Sigmoid colon (tissue), 7 donors: ENCODE measurements at regions of chr16 and their contacts with region 1.

Region 1: GRCh38 chr16:28924732-28925385 is at the start of gene RABEP2:
- DNase-seq: peak; percentile 95
- H3K4me3 ChIP-seq: peak within 1 kb of the TSS; percentile 61 to 95 (median 84)
- H3K27ac ChIP-seq: peak within 1 kb of the TSS; percentile 89 to 98 (median 98)
- H3K4me1 ChIP-seq: peaks cover 0 to 12% (median 9%) of the 10 kb centered on the region in 4 donors
- H3K27me3 ChIP-seq: no peaks in the 10 kb centered on the region
- CTCF ChIP-seq: no peak
- EP300 ChIP-seq: no peak
- POLR2A ChIP-seq: no peak
- total RNA-seq, gene RABEP2: 9.9 to 43.2 (median 15.0) TPM

Region 2: DNA sequence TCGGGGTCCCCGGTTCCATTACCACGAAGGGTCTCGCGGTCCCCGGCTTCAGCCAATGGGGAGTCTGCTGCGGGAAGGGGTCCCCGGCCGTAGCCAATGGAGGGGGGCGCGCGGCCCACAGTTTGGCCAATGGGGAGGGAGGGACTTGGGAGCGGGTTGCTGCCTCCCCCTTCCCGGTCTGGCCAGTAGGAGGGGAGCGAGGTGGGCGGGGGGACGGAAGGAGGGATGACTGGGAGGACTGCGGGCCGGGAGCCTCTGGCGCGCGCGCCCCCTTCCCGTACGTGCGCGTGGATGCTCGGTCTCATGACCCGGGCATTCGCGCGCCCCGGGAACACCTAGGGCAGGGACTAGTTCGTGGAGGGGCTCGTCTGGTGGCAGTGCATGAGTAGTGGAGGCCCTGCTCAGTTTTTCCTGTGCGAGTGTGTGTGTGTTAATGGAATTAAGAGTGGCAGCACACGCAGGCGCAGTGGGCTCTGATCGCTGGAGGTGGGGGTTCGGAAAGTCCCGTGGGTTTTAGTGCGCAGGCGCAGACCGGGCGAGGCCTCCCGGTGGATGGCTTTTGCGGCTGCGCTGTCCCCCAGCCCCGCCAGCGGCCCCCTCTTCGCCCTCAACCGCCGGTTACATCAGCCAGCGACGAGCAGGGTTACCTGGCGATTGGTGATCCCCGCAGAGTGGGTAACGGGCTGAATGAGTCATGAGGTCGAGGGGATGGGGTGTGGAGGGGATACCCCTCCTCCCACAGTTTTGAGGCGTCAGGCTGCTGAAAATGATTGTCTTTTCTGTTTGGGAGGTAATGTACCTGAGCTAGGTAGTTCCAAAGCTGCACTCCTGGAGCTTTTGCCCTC is 100.8 kb before region 1 on chr16:
- intact Hi-C with region 1: loop called (anchors 1 kb)
- DNase-seq: peak; percentile 99
- H3K4me3 ChIP-seq: peak overlapping the region; percentile 92 to 100 (median 98)
- H3K27ac ChIP-seq: peak overlapping the region; percentile 97 to 100 (median 100)
- H3K4me1 ChIP-seq: peaks cover 0 to 25% (median 24%) of the 10 kb centered on the region in 4 donors
- H3K27me3 ChIP-seq: no peaks in the 10 kb centered on the region
- CTCF ChIP-seq: peak in 1 of 4 experiments; percentile 21
- EP300 ChIP-seq: no peak
- POLR2A ChIP-seq: peak; percentile 7 to 36

Region 3: GRCh38 chr16:28863929-28864793 is 60.7 kb before region 1 on chr16:
- intact Hi-C with region 1: loop called (anchors 5 kb)
- DNase-seq: peak; percentile 78
- H3K4me3 ChIP-seq: peak overlapping the region; percentile 77 to 96 (median 88)
- H3K27ac ChIP-seq: peak overlapping the region; percentile 91 to 95 (median 95)
- H3K4me1 ChIP-seq: peaks cover 0 to 31% (median 28%) of the 10 kb centered on the region in 4 donors
- H3K27me3 ChIP-seq: no peaks in the 10 kb centered on the region
- CTCF ChIP-seq: no peak
- EP300 ChIP-seq: no peak
- POLR2A ChIP-seq: no peak

Region 4: DNA sequence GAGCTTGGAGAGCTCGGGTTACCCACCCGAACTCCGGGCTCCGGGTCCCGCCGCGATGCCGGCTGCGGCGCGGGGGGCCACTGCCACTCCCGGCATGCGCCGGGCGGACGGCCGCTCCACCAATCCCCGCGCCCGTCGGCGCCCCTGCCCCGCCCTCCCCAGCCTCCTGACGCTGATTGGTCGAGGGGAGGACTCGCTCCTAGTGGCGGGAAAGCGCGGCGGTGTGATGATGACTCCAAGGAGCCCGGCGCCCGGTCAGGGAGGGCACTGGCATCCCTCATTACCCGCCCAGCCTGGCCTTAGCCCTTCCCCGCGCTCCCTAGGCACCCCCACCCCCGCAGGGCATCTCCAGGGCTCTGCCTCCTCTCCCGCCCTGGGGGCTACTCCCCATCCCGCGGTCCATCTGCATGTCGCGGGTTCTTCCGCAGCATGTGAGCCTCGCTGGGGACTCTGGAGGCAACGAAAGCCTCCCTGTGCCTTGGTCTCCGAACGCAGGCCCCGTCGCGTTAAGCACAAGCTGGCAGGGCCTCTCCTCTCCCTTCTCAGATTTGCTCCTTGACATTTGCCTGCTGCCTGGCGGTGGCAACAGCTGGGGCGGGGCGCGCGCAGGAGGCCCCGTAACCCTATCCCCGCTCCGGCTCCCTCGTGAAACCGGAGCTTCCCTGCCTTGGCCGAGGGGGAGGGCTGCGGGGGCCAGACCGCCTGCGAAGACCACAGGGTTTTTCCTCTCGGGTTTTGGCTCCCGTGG is 44.8 kb before region 1 on chr16:
- intact Hi-C with region 1: loop called (anchors 5 kb)
- DNase-seq: peak; percentile 93
- H3K4me3 ChIP-seq: peak overlapping the region; percentile 35 to 66 (median 62)
- H3K27ac ChIP-seq: peak overlapping the region in 3 of 4 donors; percentile 29 to 55 (median 51)
- H3K4me1 ChIP-seq: peaks cover 0 to 16% (median 14%) of the 10 kb centered on the region in 4 donors
- H3K27me3 ChIP-seq: peaks cover 5 to 33% (median 12%) of the 10 kb centered on the region in 3 donors
- CTCF ChIP-seq: peak in 2 of 4 experiments; percentile 2 to 23
- EP300 ChIP-seq: no peak
- POLR2A ChIP-seq: no peak

Region 5: DNA sequence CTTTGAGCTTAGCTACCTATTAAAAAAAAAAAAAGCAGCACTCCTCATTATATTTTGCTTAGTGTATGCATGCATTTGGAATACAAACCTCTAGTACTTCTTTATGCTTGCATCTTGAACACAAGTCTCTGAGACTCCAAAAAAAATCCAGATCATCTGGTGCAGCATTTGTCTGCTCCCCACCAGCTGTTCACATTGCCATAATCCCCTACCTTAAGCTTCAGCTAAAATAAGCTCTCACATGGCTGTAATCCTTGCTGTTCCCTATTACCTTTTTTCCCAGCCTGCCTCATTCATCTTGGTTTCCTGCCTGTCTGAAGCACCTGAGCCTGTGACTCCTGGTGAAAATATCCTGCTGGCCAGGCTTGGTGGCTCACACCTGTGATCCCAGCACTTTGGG is 18.4 kb after region 1 on chr16:
- intact Hi-C with region 1: loop called (anchors 1 kb)
- DNase-seq: no peak
- H3K4me3 ChIP-seq: no peak overlapping the region
- H3K27ac ChIP-seq: no peak overlapping the region
- H3K4me1 ChIP-seq: peaks cover 0 to 10% (median 7%) of the 10 kb centered on the region in 4 donors
- H3K27me3 ChIP-seq: no peaks in the 10 kb centered on the region
- CTCF ChIP-seq: no peak
- EP300 ChIP-seq: no peak
- POLR2A ChIP-seq: no peak